Activated naive CD4-positive, alpha-beta T cell treated with anti-CD3 and anti-CD28 coated beads for 36 hours (primary cell): ENCODE measurements at regions of chr6 and their contacts with region 1.

Region 1: GRCh38 chr6:138109042-138109997 is 2.1 kb upstream of the PERP start:
- DNase-seq: peak; percentile 93
- H3K4me3 Mint-ChIP-seq: no peak overlapping the region
- H3K27ac Mint-ChIP-seq: no peak overlapping the region
- H3K4me1 Mint-ChIP-seq: peaks cover 19% of the 10 kb centered on the region
- H3K27me3 Mint-ChIP-seq: peaks cover 30% of the 10 kb centered on the region

Region 2: DNA sequence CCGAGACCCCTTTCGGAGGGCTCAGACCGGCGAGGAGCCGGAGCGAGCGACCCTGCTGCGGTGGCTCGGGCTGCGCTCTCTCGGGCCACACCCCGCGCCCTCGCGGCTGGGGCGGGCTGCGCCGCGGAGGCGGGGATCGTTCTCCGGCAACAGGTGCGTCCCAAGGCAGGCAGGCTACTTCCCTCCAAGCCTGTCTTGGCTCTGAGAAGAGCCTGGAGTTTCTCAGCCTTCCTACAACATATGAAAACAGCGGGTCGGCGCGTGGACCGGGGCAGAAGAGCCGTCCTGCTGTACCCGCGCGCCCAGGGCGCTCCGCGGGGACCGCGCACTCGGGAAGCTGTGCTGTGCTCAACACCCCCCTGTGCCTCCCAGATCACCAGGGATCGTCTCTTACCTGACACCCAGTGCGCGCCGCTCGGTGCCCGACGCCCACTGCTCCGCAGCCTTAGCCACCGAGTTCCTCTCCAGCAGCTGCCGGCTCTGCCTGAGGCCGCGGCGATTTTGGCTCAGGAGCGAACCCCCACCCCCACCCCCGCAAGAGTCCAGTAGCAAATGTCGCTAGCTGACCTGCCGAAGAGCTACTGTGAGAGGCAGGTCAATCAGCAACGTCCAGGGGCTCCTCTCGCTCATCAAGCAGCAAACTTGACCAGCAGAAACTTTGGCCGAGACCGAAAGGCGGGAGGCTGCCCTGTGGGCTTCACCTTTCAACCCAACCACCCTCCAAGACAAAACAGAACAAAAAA is 611.4 kb before region 1 on chr6:
- CTCF ChIA-PET with region 1: interaction called, 3 read pairs
- intact Hi-C with region 1: loop called (anchors 5 kb)
- DNase-seq: no peak
- H3K4me3 Mint-ChIP-seq: peak overlapping the region; percentile 68
- H3K27ac Mint-ChIP-seq: no peak overlapping the region
- H3K4me1 Mint-ChIP-seq: peaks cover 46% of the 10 kb centered on the region
- H3K27me3 Mint-ChIP-seq: peaks cover 63% of the 10 kb centered on the region

Region 3: DNA sequence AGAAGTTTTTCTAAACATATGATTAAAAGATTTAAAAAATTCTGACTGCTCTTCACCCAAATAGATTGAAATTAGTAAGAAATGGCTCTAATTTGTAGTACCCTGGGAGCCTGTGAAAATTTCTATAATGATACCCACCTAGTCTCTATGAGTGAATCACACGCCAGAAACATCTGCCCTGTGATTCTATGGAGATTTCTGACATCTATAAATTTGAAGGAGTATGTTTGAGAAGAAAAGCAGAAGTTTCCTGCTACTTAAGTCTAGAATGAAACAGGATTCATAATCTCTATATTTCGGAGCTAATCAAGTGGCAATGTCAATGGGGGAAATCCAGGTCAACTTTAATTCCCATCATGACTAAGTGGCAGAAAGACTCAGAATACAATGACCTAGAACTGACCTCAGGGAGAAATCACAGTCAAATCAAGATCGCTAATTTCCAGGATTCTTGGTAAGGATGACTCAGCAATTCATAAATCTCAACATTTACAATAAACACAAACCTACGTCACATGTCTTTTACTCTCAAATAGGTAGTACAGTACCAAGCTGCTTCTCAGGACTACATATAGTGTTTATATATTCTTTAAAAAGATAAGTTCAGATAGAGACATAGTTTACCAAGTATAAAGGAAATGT is 428.5 kb before region 1 on chr6:
- CTCF ChIA-PET with region 1: no interaction called
- intact Hi-C with region 1: loop called (anchors 1 kb)
- DNase-seq: no peak
- H3K4me3 Mint-ChIP-seq: no peak overlapping the region
- H3K27ac Mint-ChIP-seq: peak overlapping the region; percentile 84
- H3K4me1 Mint-ChIP-seq: peaks cover 54% of the 10 kb centered on the region
- H3K27me3 Mint-ChIP-seq: peaks cover 8% of the 10 kb centered on the region

Region 4: DNA sequence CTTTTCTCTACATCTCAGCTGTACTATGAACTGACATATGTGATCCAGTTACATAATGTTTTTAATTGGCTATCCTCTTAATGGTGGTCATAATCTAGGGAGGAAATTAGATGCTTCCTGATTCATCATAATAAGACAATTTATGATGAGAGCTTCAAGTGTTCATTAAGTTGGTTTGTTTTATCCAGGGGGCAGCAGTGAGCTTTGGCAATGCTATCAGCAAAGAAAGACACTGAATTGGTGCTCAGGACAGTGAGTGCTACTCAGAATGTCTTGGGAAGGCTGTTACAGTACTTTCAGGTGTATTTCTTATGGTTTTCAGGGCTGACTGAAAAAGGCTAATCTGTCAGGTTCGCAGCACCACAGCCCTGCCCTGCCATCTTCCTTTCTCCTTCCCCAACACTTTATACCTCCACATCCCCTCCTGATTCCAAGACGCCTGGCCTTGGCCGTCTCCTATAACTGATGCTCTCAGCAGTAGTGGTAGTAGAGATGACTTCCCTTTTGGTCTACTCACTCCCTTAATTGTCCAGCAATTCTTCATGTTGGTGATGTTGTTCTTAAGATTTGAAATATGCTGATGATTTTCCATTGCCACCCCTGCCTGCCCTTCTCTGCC is 309.3 kb before region 1 on chr6:
- CTCF ChIA-PET with region 1: no interaction called
- intact Hi-C with region 1: loop called (anchors 1 kb)
- DNase-seq: peak; percentile 86
- H3K4me3 Mint-ChIP-seq: no peak overlapping the region
- H3K27ac Mint-ChIP-seq: peak overlapping the region; percentile 73
- H3K4me1 Mint-ChIP-seq: peaks cover 60% of the 10 kb centered on the region
- H3K27me3 Mint-ChIP-seq: no peaks in the 10 kb centered on the region

Region 5: GRCh38 chr6:137951064-137951597 is 158.2 kb before region 1 on chr6:
- CTCF ChIA-PET with region 1: no interaction called
- intact Hi-C with region 1: loop called (anchors 1 kb)
- DNase-seq: no peak
- H3K4me3 Mint-ChIP-seq: no peak overlapping the region
- H3K27ac Mint-ChIP-seq: no peak overlapping the region
- H3K4me1 Mint-ChIP-seq: peaks cover 31% of the 10 kb centered on the region
- H3K27me3 Mint-ChIP-seq: no peaks in the 10 kb centered on the region

Region 6: DNA sequence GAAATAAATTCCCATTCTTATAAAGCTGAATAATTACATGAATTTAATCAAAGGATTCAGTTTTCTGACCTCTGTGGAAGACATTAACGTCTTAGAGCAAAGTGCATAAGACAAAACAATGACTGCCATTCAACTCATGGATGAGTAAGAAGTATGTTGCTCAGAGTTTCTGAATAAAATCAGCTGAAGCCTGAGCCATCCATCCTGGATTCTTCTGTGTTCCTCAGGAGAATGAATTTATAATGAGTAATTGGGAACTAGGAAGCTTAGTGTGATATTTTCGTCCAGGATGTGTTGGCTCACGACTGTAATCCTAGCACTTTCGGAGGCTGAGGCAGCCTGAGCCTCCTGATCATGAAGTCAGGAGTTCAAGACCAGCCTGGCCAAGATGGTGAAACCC is 64.9 kb before region 1 on chr6:
- CTCF ChIA-PET with region 1: no interaction called
- intact Hi-C with region 1: no loop called
- DNase-seq: no peak
- H3K4me3 Mint-ChIP-seq: no peak overlapping the region
- H3K27ac Mint-ChIP-seq: no peak overlapping the region
- H3K4me1 Mint-ChIP-seq: no peaks in the 10 kb centered on the region
- H3K27me3 Mint-ChIP-seq: no peaks in the 10 kb centered on the region

Region 7: GRCh38 chr6:138258991-138259390 is 149.7 kb after region 1 on chr6:
- CTCF ChIA-PET with region 1: no interaction called
- intact Hi-C with region 1: no loop called
- DNase-seq: no peak
- H3K4me3 Mint-ChIP-seq: no peak overlapping the region
- H3K27ac Mint-ChIP-seq: no peak overlapping the region
- H3K4me1 Mint-ChIP-seq: no peaks in the 10 kb centered on the region
- H3K27me3 Mint-ChIP-seq: peaks cover 5% of the 10 kb centered on the region

Region 8: DNA sequence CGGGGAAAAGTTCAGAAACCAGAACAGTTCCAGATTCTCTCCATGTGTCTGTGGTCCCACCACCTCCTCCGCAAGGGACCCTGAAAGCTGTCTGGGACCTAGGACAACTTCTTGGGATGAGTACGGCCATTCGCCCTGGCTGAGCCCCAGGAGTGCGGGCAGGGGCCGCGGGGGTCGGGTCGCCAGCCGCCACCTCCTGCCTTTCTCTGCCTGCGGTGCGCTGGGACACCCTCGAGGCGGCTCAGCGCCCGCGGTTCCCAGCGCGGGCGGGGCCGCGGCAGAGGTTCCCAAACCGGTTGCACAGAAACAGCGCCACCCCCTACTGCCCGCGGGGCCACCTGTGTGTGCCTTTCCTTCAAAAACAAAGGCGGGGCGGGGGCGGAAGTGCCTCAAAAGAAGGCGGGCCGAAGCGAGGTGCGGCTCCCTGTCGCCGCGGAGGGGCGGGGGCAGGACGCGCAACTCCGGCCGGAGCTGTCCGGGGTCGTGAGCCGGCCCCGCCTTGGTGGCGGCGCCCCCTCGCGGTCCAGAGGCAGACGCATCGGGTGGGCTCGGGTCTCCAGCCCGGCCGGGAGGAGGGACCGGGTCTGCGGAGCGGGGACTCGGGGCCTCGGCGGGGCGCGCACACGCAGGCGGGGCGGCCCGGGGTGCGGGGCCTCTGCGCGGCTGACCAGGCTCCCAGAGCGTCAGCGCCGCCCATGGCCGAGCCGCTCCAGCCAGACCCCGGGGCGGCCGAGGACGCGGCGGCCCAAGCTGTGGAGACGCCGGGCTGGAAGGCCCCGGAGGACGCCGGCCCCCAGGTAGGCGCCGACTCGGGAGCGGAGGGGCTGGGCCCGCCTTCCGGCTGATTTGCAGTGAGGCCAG is 294.7 kb after region 1 on chr6 and contains the start of gene HEBP2:
- CTCF ChIA-PET with region 1: interaction called, 7 read pairs
- intact Hi-C with region 1: loop called (anchors 2 kb)
- DNase-seq: peak; percentile 98
- H3K4me3 Mint-ChIP-seq: peak within 1 kb of the TSS; percentile 81
- H3K27ac Mint-ChIP-seq: peak within 1 kb of the TSS; percentile 77
- H3K4me1 Mint-ChIP-seq: peaks cover 15% of the 10 kb centered on the region
- H3K27me3 Mint-ChIP-seq: no peaks in the 10 kb centered on the region
- total RNA-seq, gene HEBP2: 48.5 to 50.8 TPM